Transverse colon (tissue), 4 donors: ENCODE measurements at regions of chr2 and their contacts with region 1.

Region 1: GRCh38 chr2:21317131-21317530 is 193.4 kb downstream of the TDRD15 start:
- DNase-seq: peak; percentile 57
- H3K4me3 ChIP-seq: no peak overlapping the region
- H3K27ac ChIP-seq: no peak overlapping the region
- H3K4me1 ChIP-seq: no peaks in the 10 kb centered on the region
- H3K27me3 ChIP-seq: no peaks in the 10 kb centered on the region
- CTCF ChIP-seq: peak; percentile 59 to 79 (median 68)
- EP300 ChIP-seq: no peak
- POLR2A ChIP-seq: no peak

Region 2: DNA sequence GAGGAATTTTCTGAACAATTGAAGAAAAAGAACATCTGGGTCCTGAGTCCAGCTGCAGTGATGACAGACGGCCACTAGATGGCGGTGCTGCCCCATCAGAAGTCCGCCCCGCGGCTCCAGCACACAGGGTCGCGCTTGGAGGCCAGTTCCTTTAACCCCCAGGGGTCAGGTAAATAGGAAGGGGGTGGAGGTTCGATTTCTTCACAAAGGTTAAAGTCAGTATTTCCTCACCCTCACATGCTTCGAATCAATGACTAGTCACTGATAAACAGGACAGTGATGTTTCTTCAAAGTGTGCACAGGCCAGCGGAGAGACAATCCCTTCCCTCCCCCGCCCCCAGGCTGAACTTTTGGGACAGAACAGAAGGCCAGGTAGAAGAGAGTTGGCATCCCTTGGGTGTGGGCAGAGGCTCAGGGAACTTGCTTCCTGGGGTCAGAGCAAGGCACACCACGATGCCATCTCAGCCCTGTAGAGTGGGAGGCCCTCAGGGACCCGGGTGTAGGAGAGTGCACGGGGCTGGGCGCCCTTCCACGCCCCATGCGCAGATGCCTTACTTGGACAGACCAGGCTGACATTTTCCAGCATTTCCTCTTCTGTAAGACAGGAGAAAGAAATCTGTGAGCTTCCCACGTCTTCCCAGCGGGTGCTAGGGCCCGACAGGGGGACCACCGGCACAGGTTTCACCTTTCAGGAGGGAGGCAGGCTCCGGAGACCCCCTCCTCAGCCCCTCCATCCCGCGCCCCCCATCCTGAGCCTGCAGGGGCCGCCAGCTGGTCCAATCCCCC is 274.0 kb before region 1 on chr2:
- in situ Hi-C with region 1: loop called in 3 of 4 experiments (anchors 10 to 25 kb)
- intact Hi-C with region 1: no loop called
- DNase-seq: peak; percentile 62
- H3K4me3 ChIP-seq: no peak overlapping the region
- H3K27ac ChIP-seq: no peak overlapping the region
- H3K4me1 ChIP-seq: peaks cover 0 to 15% (median 4%) of the 10 kb centered on the region in 4 donors
- H3K27me3 ChIP-seq: peaks cover 18% of the 10 kb centered on the region
- CTCF ChIP-seq: peak; percentile 92 to 99 (median 98)
- EP300 ChIP-seq: no peak
- POLR2A ChIP-seq: no peak

Region 3: DNA sequence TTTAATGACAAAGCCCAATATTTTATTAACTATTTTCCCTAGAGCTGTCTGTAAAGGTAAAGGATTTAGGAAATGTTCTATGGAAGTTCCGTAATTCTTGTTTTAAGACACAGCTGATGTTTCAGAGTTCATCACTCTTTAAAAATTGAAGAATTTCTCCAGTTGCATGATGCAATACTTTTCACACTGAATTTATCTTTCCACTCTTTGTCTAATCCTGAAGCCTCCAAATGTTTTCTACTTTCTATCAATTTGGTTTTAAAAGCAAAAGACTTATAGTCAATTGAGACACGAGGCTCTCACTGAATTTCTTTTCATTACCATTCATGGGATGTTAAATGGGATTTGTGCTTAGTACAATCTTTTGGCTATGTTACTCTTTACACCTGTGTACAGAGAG is 29.9 kb after region 1 on chr2:
- in situ Hi-C with region 1: no loop called
- intact Hi-C with region 1: no loop called
- DNase-seq: no peak
- H3K4me3 ChIP-seq: no peak overlapping the region
- H3K27ac ChIP-seq: no peak overlapping the region
- H3K4me1 ChIP-seq: no peaks in the 10 kb centered on the region
- H3K27me3 ChIP-seq: no peaks in the 10 kb centered on the region
- CTCF ChIP-seq: no peak
- EP300 ChIP-seq: no peak
- POLR2A ChIP-seq: no peak